CD14-positive monocyte (primary cell): ENCODE measurements at regions of chr1 and their contacts with region 1.

Region 1: GRCh38 chr1:116139592-116140134 is 28.5 kb downstream of the MAB21L3 start:
- DNase-seq: no peak
- H3K4me3 ChIP-seq: no peak overlapping the region
- H3K4me3 Mint-ChIP-seq: no peak overlapping the region
- H3K27ac ChIP-seq: no peak overlapping the region
- H3K27ac Mint-ChIP-seq: no peak overlapping the region
- H3K4me1 ChIP-seq: peaks cover 0 to 5% of the 10 kb centered on the region in 2 donors
- H3K4me1 Mint-ChIP-seq: peaks cover 6% of the 10 kb centered on the region
- H3K27me3 ChIP-seq: no peaks in the 10 kb centered on the region
- H3K27me3 Mint-ChIP-seq: peaks cover 0 to 3% (median 0%) of the 10 kb centered on the region in 3 donors
- CTCF ChIP-seq: no peak

Region 2: DNA sequence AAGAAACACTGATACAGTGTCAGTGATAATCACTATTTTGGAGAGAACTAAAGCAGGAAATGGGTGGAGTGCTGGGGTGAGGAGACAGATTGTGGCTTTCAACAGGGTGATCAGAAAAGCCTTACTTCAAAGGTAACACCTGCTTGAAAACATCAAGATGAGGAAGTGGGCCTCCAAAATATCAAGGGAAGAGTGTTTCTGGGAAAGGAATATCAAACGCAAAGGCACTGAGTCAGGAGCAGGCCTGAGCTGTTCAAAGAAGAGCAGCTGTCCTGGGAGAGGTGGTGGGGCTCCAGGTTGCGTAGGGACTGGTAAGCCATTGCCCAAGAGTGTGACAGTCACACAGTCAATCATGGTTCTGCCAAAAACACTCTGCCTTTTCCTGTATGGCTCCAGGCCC is 186.3 kb after region 1 on chr1:
- intact Hi-C with region 1: no loop called
- DNase-seq: no peak
- H3K4me3 ChIP-seq: no peak overlapping the region
- H3K4me3 Mint-ChIP-seq: no peak overlapping the region
- H3K27ac ChIP-seq: no peak overlapping the region
- H3K27ac Mint-ChIP-seq: peak overlapping the region in 1 of 7 donors; percentile 65
- H3K4me1 ChIP-seq: no peaks in the 10 kb centered on the region
- H3K4me1 Mint-ChIP-seq: peaks cover 3% of the 10 kb centered on the region
- H3K27me3 ChIP-seq: no peaks in the 10 kb centered on the region
- H3K27me3 Mint-ChIP-seq: peaks cover 0 to 2% (median 1%) of the 10 kb centered on the region in 3 donors
- CTCF ChIP-seq: no peak

Region 3: GRCh38 chr1:116485071-116485735 is 345.5 kb after region 1 on chr1:
- intact Hi-C with region 1: loop called in 1 of 2 experiments (anchors 5 kb)
- DNase-seq: peak; percentile 74 to 79 (median 75)
- H3K4me3 ChIP-seq: no peak overlapping the region
- H3K4me3 Mint-ChIP-seq: no peak overlapping the region
- H3K27ac ChIP-seq: no peak overlapping the region
- H3K27ac Mint-ChIP-seq: peak overlapping the region in 1 of 7 donors; percentile 46
- H3K4me1 ChIP-seq: no peaks in the 10 kb centered on the region
- H3K4me1 Mint-ChIP-seq: peaks cover 9% of the 10 kb centered on the region
- H3K27me3 ChIP-seq: no peaks in the 10 kb centered on the region
- H3K27me3 Mint-ChIP-seq: peaks cover 0 to 5% (median 4%) of the 10 kb centered on the region in 3 donors
- CTCF ChIP-seq: peak; percentile 92

Region 4: DNA sequence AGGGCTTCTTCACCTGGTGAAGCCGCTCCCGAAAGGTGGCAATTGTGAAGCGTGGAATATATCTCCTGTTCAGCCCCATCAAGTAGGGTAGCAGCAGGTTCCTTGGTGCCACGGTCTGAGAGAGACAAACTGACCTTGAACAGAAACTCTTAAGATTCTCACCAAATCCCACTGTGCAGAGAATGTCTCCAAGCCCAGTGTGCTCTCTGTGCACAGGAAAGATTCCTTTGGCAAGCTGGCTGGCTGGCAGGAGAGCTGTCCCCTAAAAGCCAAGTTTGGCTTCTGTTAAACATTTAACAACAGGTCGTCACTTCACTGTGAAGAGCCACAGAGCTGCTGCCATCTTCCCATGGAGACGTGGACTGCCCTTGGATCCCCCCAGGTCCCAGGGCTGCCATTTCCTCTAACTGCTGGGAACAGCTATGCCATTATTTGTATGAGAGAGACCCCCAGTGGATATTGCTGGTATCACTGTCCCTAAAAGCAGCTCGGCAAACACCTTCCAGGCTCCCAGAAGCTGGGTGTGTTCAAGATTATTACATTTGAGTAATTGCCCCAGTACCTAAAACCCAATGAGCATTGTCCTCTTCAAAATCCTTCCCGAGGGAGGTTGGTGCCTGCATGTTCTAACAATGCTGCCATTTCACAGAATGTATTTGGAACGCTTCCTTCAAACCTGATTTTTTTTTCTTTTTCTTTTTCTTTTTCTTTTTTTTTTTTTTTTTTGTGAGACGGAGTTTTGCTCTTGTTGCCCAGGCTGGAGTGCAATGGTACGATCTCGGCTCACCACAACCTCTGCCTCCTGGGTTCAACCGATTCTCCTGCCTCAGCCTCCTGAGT is 359.3 kb after region 1 on chr1:
- intact Hi-C with region 1: loop called (anchors 5 kb)
- DNase-seq: peak; percentile 68 to 79 (median 75)
- H3K4me3 ChIP-seq: no peak overlapping the region
- H3K4me3 Mint-ChIP-seq: no peak overlapping the region
- H3K27ac ChIP-seq: no peak overlapping the region
- H3K27ac Mint-ChIP-seq: peak overlapping the region in 6 of 7 donors; percentile 49 to 95 (median 76)
- H3K4me1 ChIP-seq: peaks cover 67 to 73% of the 10 kb centered on the region in 2 donors
- H3K4me1 Mint-ChIP-seq: peaks cover 72% of the 10 kb centered on the region
- H3K27me3 ChIP-seq: no peaks in the 10 kb centered on the region
- H3K27me3 Mint-ChIP-seq: peaks cover 0 to 2% (median 0%) of the 10 kb centered on the region in 3 donors
- CTCF ChIP-seq: peak; percentile 89